GM12878 (cell line): ENCODE measurements at regions of chr1 and their contacts with region 1.

Region 1: GRCh38 chr1:93701619-93702018 is 20.0 kb upstream of the BCAR3 start:
- DNase-seq: no peak
- ATAC-seq: peak; percentile 45
- H3K4me3 ChIP-seq: no peak overlapping the region
- H3K27ac ChIP-seq: peak overlapping the region; percentile 63
- H3K4me1 ChIP-seq: peaks cover 54% of the 10 kb centered on the region
- H3K27me3 ChIP-seq: no peaks in the 10 kb centered on the region
- CTCF ChIP-seq: no peak
- EP300 ChIP-seq: no peak
- POLR2A ChIP-seq: no peak
- RAD21 ChIP-seq: no peak

Region 2: GRCh38 chr1:92901699-92902405 is 799.8 kb before region 1 on chr1:
- CTCF ChIA-PET with region 1: no interaction called
- POLR2A ChIA-PET with region 1: no interaction called
- RAD21 ChIA-PET with region 1: no interaction called
- SMC1A ChIA-PET with region 1: no interaction called
- in situ Hi-C with region 1: no loop called
- intact Hi-C with region 1: no loop called
- DNase-seq: no peak
- ATAC-seq: no peak
- H3K4me3 ChIP-seq: no peak overlapping the region
- H3K27ac ChIP-seq: no peak overlapping the region
- H3K4me1 ChIP-seq: peaks cover 7% of the 10 kb centered on the region
- H3K27me3 ChIP-seq: no peaks in the 10 kb centered on the region
- CTCF ChIP-seq: no peak
- EP300 ChIP-seq: no peak
- POLR2A ChIP-seq: no peak
- RAD21 ChIP-seq: no peak

Region 3: GRCh38 chr1:93061895-93062792 is 639.5 kb before region 1 on chr1:
- CTCF ChIA-PET with region 1: no interaction called
- POLR2A ChIA-PET with region 1: no interaction called
- RAD21 ChIA-PET with region 1: no interaction called
- SMC1A ChIA-PET with region 1: no interaction called
- in situ Hi-C with region 1: no loop called
- intact Hi-C with region 1: no loop called
- DNase-seq: no peak
- ATAC-seq: peak; percentile 99
- H3K4me3 ChIP-seq: no peak overlapping the region
- H3K27ac ChIP-seq: no peak overlapping the region
- H3K4me1 ChIP-seq: no peaks in the 10 kb centered on the region
- H3K27me3 ChIP-seq: no peaks in the 10 kb centered on the region; a peak in 1 of 4 replicates
- CTCF ChIP-seq: peak; percentile 67 to 83 (median 72)
- EP300 ChIP-seq: no peak
- POLR2A ChIP-seq: no peak
- RAD21 ChIP-seq: peak; percentile 90

Region 4: GRCh38 chr1:93680757-93681550 is 20.7 kb before region 1 on chr1:
- CTCF ChIA-PET with region 1: interaction called, 15 read pairs
- POLR2A ChIA-PET with region 1: interaction called, 7 read pairs
- RAD21 ChIA-PET with region 1: interaction called, 19 read pairs
- SMC1A ChIA-PET with region 1: interaction called, 20 read pairs
- in situ Hi-C with region 1: no loop called
- intact Hi-C with region 1: loop called (anchors 2 kb)
- DNase-seq: no peak
- ATAC-seq: peak; percentile 82
- H3K4me3 ChIP-seq: peak overlapping the region; percentile 87
- H3K27ac ChIP-seq: no peak overlapping the region
- H3K4me1 ChIP-seq: peaks cover 13% of the 10 kb centered on the region; the same call in 1 of the 2 replicates
- H3K27me3 ChIP-seq: peaks cover 0 to 4% of the 10 kb centered on the region in 2 experiments; a peak in 2 of 4 replicates
- CTCF ChIP-seq: peak; percentile 46 to 66 (median 52); a peak in 5 of 6 replicates
- EP300 ChIP-seq: no peak
- POLR2A ChIP-seq: no peak
- RAD21 ChIP-seq: peak; percentile 51; the same call in 1 of the 2 replicates

Region 5: DNA sequence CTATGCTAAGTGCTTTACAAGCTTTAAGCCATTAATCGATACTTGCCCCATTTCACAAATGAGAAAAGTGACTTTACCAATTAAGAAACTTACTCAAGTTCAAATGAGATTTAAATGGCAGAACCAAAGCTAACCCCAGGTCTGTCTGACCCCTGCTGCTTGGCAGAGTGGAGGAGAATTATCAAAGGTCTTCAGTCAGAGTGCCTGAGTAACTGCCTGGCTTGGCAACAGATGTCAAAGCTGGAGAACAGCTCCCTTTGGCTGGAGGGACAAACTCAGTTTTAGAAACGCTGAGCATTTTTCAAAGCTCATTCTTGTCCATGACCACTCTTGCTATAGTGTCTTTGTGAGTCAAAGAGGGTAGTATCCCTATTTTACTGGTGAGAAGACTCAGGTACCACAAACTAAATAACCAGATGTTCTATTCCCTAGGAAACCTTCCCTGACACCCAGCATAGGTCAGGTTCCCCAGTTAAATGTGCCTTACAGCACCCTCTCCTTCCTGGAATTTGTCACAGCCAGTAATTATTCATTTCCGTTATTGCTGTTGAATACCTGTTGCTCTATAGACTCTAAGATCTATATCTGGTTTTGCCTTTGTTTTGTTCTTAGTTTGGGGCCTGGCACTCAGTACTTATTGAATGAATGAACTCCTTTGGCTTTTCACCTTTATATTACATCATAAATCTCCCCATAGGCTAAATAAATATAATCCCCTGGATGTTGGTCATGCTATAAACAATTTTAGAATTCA is 14.9 kb before region 1 on chr1:
- CTCF ChIA-PET with region 1: interaction called, 19 read pairs
- POLR2A ChIA-PET with region 1: interaction called, 38 read pairs
- RAD21 ChIA-PET with region 1: interaction called, 69 read pairs
- SMC1A ChIA-PET with region 1: interaction called, 104 read pairs
- in situ Hi-C with region 1: no loop called
- intact Hi-C with region 1: loop called (anchors 2 kb)
- DNase-seq: no peak
- ATAC-seq: no peak
- H3K4me3 ChIP-seq: no peak overlapping the region
- H3K27ac ChIP-seq: no peak overlapping the region
- H3K4me1 ChIP-seq: peaks cover 16% of the 10 kb centered on the region
- H3K27me3 ChIP-seq: no peaks in the 10 kb centered on the region; a peak in 2 of 4 replicates
- CTCF ChIP-seq: no peak
- EP300 ChIP-seq: no peak
- POLR2A ChIP-seq: no peak
- RAD21 ChIP-seq: no peak

Region 6: GRCh38 chr1:93744299-93744988 is 42.8 kb after region 1 on chr1:
- CTCF ChIA-PET with region 1: interaction called, 18 read pairs
- POLR2A ChIA-PET with region 1: no interaction called
- RAD21 ChIA-PET with region 1: interaction called, 17 read pairs
- SMC1A ChIA-PET with region 1: interaction called, 39 read pairs
- in situ Hi-C with region 1: no loop called
- intact Hi-C with region 1: no loop called
- DNase-seq: peak; percentile 16
- ATAC-seq: peak; percentile 78
- H3K4me3 ChIP-seq: no peak overlapping the region
- H3K27ac ChIP-seq: no peak overlapping the region
- H3K4me1 ChIP-seq: peaks cover 17% of the 10 kb centered on the region
- H3K27me3 ChIP-seq: no peaks in the 10 kb centered on the region
- CTCF ChIP-seq: no peak
- EP300 ChIP-seq: no peak
- POLR2A ChIP-seq: no peak
- RAD21 ChIP-seq: no peak

Region 7: GRCh38 chr1:93749894-93750301 is 48.3 kb after region 1 on chr1:
- CTCF ChIA-PET with region 1: interaction called, 18 read pairs
- POLR2A ChIA-PET with region 1: interaction called, 6 read pairs
- RAD21 ChIA-PET with region 1: interaction called, 17 read pairs
- SMC1A ChIA-PET with region 1: interaction called, 39 read pairs
- in situ Hi-C with region 1: no loop called
- intact Hi-C with region 1: no loop called
- DNase-seq: no peak
- ATAC-seq: peak; percentile 56
- H3K4me3 ChIP-seq: no peak overlapping the region
- H3K27ac ChIP-seq: no peak overlapping the region
- H3K4me1 ChIP-seq: peaks cover 19% of the 10 kb centered on the region
- H3K27me3 ChIP-seq: no peaks in the 10 kb centered on the region
- CTCF ChIP-seq: peak in 2 of 3 experiments; percentile 9 to 41; a peak in 2 of 6 replicates
- EP300 ChIP-seq: no peak
- POLR2A ChIP-seq: no peak
- RAD21 ChIP-seq: peak; percentile 39; the same call in 1 of the 2 replicates

Region 8: DNA sequence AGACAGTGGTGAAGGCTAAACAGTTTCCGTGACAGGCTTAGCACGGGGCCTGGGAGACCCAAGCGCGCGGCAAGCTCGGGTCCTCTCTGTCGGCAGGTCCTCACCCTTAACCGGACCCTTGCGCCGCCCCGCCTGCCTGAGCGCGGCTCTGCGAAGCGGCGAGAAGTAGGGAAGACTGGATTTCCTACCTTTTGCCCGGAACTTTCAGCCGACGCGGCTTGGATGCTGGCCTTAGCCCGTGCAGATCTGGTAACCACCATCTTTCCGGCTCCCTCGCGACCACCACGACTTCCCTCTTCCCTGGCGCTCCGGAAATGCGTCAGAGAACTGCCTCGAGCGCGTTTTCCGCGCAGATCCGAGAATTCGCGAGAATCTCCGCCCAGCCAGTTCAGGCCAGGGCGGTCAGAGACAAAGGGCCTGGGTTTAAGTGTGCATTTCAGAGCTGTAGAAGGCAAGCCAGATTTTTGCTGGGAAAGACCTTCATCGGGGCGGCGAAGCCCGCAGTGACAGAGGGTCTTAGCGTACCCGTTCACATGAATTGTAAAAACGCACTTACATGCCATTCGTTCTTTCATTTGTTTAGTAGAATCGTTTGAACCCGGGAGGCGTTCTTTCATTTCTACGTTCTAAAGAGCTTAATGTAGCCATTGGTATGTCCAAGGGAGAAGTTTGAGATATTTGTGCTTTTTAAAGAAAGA is 177.4 kb after region 1 on chr1 and contains the start of gene DNTTIP2:
- CTCF ChIA-PET with region 1: no interaction called
- POLR2A ChIA-PET with region 1: no interaction called
- RAD21 ChIA-PET with region 1: no interaction called
- SMC1A ChIA-PET with region 1: no interaction called
- in situ Hi-C with region 1: no loop called
- intact Hi-C with region 1: loop called (anchors 1 kb)
- DNase-seq: peak; percentile 69
- ATAC-seq: peak; percentile 97
- H3K4me3 ChIP-seq: peak within 1 kb of the TSS; percentile 95
- H3K27ac ChIP-seq: peak within 1 kb of the TSS; percentile 94
- H3K4me1 ChIP-seq: peaks cover 9% of the 10 kb centered on the region; the same call in 1 of the 2 replicates
- H3K27me3 ChIP-seq: no peaks in the 10 kb centered on the region
- CTCF ChIP-seq: no peak
- EP300 ChIP-seq: no peak
- POLR2A ChIP-seq: peak; percentile 99
- RAD21 ChIP-seq: no peak
- polyA plus RNA-seq, gene DNTTIP2: 79.0 to 82.8 TPM

Region 9: GRCh38 chr1:93980320-93981273 is 279.0 kb after region 1 on chr1:
- CTCF ChIA-PET with region 1: no interaction called
- POLR2A ChIA-PET with region 1: no interaction called
- RAD21 ChIA-PET with region 1: no interaction called
- SMC1A ChIA-PET with region 1: no interaction called
- in situ Hi-C with region 1: no loop called
- intact Hi-C with region 1: no loop called
- DNase-seq: no peak
- ATAC-seq: peak; percentile 85
- H3K4me3 ChIP-seq: no peak overlapping the region
- H3K27ac ChIP-seq: no peak overlapping the region
- H3K4me1 ChIP-seq: no peaks in the 10 kb centered on the region
- H3K27me3 ChIP-seq: no peaks in the 10 kb centered on the region
- CTCF ChIP-seq: peak; percentile 27 to 34 (median 28); a peak in 3 of 6 replicates
- EP300 ChIP-seq: no peak
- POLR2A ChIP-seq: no peak
- RAD21 ChIP-seq: peak; percentile 26; the same call in 1 of the 2 replicates